HEK293T (cell line): ENCODE measurements at regions of chr10 and their contacts with region 1.

Region 1: DNA sequence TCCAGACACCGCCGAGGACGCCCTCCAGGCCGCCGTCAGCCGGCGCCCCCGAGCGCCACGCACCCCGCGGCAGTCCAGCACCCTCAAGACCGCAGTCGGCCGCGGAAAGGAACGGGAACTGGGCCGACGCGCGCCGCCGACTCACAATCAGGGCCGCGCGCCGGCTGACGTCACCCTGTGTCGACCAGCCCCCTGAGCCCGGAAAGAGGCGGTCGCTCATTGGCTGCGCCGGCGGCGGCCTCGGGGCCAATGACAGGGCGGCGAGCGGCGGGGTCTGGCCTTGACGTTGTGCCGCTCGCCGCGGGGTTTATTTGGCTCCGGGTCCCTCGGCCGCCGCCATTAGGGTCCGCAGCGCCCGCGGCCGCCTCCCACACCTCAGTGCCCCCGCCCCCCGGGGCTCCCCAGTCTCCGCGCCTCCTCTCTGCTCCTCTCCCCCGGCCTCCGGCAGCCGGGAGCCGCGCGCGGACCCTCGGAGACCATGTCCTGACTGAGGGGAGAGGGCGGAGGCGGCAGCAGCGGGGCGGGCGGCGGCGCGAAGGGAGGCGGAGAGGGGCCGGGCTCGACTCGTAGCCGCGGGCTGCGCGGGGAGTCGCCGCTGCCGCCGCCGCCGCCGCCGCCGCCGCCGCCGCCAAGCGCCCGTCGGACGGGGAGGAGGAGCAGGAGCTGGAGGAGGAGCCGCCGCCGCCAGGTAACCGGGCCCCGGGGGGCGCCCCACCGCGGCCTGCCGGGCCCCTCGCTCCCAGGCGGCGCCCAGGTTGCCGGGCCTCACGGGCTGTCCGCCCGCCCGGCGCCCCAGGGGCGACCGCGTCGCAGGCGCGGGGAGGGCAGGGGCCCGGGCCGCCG is 25.1 kb upstream of the ZRANB1 start:
- DNase-seq: peak; percentile 99

Region 2: DNA sequence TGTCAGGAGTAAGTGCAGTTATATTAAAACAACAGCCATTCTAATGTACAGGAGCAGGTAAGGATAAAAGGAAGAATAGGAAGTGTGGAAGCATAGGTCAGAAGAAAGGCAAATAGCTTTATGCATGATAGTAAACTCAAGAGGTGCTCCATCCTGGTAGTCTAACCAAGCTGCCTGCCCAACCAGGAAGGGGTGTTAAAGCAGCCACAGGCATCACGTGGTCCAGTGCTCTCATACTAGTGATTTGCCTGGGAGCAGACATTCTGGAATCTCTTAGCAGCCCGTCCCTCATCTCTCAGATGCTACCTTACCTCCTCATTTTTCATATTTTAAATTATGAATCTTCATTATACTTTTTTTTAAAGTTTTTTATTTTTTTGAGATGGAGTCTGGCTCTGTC is 96.7 kb before region 1 on chr10:
- CTCF ChIA-PET with region 1: interaction called, 10 read pairs
- POLR2A ChIA-PET with region 1: no interaction called
- DNase-seq: no peak

Region 3: DNA sequence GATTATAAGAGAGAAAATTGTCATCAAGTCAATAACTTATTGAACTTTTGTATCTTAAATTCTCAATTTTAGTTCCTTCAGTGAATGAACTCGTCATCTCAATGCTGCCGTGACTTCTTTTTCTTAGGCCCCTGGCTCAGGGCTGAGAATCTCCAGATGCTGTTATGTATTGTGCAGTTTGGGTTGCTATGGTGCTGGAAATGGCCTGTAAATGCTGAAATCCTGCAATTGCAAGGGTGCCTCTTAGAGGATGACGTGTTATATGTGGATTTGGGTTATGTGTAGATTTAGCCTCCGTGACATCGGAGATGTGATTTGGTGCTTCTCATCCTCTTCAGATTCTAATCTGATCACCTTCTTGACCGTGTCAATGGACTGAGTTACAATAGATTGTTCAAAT is 30.6 kb before region 1 on chr10:
- CTCF ChIA-PET with region 1: no interaction called
- POLR2A ChIA-PET with region 1: interaction called, 12 read pairs
- DNase-seq: no peak

Region 4: DNA sequence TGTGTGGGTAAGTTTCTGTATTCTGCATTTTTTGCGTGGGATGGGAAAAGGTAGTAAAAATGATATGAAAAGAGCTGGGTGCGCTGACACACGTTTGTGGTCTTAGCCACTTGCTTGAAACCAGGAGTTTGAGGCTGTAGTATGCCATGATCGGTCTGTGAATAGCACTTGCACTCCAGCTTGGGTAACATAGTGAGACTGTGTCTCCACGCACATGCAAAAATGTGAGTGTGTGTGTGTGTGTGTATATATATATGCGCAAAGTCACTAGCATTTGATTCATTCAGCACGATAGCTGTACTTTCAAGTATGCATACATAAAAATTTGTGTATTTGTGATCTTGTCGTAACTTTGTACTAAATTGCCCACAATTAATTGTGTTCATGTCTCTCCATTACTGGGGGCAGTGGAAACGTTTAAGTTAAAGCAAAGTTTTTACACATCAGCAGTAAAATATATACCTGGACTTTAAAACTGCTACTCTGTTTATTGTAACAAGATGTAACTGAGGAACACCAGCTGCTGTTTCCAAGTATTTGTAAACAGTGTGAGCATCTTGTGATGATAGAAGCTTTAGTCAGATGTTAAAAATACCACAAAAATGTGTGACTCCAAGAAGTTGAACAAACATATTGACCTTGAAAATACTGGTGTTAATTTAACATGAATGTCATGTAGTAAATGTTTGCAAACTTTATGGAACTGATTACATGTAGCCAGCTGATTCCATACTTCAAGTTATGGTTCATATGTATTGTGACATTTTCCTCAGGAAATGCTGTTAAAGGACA is 26.7 kb after region 1 on chr10:
- CTCF ChIA-PET with region 1: no interaction called
- POLR2A ChIA-PET with region 1: no interaction called
- DNase-seq: no peak